Activated CD8-positive, alpha-beta memory T cell treated with anti-CD3 and anti-CD28 coated beads, Interleukin-2, amount 10 ng/mL, durations not matched to agents 7 days and 5 days (primary cell): ENCODE measurements at regions of chr10 and their contacts with region 1.

Region 1: GRCh38 chr10:73730153-73730906 is 13.8 kb upstream of the SEC24C start:
- DNase-seq: peak; percentile 95
- ATAC-seq: peak; percentile 95
- H3K4me3 Mint-ChIP-seq: peak overlapping the region; percentile 98
- H3K27ac Mint-ChIP-seq: peak overlapping the region; percentile 96
- H3K4me1 Mint-ChIP-seq: peaks cover 15% of the 10 kb centered on the region
- H3K27me3 Mint-ChIP-seq: no peaks in the 10 kb centered on the region

Region 2: DNA sequence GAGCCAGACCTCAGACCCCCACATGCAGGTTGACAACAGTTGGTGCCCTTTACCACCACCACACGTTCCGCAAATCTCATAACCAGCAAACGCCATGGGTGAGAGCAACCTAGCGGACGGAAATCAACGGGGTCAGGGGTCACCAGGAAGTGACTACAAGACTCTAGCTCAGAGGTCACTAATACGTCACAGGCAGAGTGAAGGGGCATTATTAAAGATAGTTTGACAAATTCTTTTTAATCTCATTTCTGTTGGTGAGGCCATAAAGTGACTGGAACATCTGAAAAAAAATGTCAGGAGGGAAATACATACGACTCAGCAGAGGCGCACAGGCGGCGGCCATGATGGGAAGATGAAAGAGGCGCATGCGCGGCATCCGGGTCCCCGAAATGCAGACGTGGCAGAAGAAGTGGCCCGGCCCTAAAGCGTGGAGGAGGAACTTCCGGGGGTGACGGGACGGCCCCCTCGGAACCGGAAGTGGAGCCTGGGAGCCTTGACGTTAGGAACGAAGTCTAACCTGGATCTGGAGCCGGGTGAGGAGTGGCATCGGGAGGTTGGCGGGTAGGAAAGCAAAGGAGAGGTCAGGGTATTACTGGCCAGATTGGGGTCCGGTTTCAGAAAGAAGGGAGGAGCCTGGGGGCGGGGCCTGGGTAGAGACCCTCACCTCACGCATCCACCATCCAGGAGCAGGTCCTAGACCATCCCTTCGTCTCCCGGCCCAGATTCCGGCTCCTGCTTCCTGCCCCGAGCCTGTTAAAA is 13.8 kb after region 1 on chr10 and contains the start of gene SEC24C:
- CTCF ChIA-PET with region 1: interaction called, 18 read pairs
- DNase-seq: peak; percentile 98
- ATAC-seq: peak; percentile 95
- H3K4me3 Mint-ChIP-seq: peak within 1 kb of the TSS; percentile 99
- H3K27ac Mint-ChIP-seq: peak within 1 kb of the TSS; percentile 100
- H3K4me1 Mint-ChIP-seq: peaks cover 40% of the 10 kb centered on the region
- H3K27me3 Mint-ChIP-seq: no peaks in the 10 kb centered on the region
- total RNA-seq, gene SEC24C: 84.5 to 98.0 TPM

Region 3: DNA sequence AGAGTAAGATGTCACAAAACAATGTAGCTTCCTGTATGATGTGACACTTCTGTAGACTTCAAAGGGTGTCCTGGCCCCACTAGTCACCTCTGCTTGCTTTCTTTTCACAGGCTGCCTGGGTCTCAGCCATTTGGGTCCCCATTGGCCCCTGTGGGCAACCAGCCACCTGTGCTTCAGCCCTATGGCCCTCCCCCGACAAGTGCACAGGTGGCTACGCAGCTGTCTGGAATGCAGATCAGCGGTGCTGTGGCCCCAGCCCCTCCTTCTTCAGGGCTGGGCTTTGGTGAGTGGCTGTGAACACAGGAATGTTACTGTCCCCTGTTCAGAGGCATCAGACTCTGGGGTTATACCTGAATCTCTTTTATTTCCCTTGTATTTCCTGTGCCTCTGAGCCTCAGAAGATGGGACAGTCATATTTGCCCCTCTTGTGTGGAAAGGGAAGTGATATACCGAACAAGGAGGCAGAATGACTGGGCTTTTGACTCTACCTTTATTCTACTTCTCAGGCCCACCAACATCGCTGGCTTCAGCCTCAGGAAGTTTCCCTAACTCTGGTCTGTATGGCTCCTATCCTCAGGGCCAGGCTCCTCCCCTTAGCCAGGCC is 29.3 kb after region 1 on chr10:
- CTCF ChIA-PET with region 1: no interaction called
- DNase-seq: peak; percentile 66
- ATAC-seq: peak; percentile 73
- H3K4me3 Mint-ChIP-seq: peak overlapping the region; percentile 26
- H3K27ac Mint-ChIP-seq: peak overlapping the region; percentile 84
- H3K4me1 Mint-ChIP-seq: peaks cover 71% of the 10 kb centered on the region
- H3K27me3 Mint-ChIP-seq: no peaks in the 10 kb centered on the region